PC-9 (cell line): ENCODE measurements at regions of chr11 and their contacts with region 1.

Region 1: GRCh38 chr11:86644291-86644690 is 28.1 kb downstream of the ME3 start:
- DNase-seq: no peak
- H3K4me3 ChIP-seq: no peak overlapping the region
- H3K27ac ChIP-seq: no peak overlapping the region
- H3K4me1 ChIP-seq: peaks cover 21% of the 10 kb centered on the region
- H3K27me3 ChIP-seq: no peaks in the 10 kb centered on the region
- CTCF ChIP-seq: no peak

Region 2: GRCh38 chr11:85826116-85826855 is 818.0 kb before region 1 on chr11:
- CTCF ChIA-PET with region 1: no interaction called
- POLR2A ChIA-PET with region 1: interaction called, 10 read pairs
- intact Hi-C with region 1: no loop called
- DNase-seq: peak in 1 of 2 experiments; percentile 41
- H3K4me3 ChIP-seq: no peak overlapping the region
- H3K27ac ChIP-seq: peak overlapping the region; percentile 93
- H3K4me1 ChIP-seq: peaks cover 68% of the 10 kb centered on the region
- H3K27me3 ChIP-seq: no peaks in the 10 kb centered on the region
- CTCF ChIP-seq: peak; percentile 69

Region 3: DNA sequence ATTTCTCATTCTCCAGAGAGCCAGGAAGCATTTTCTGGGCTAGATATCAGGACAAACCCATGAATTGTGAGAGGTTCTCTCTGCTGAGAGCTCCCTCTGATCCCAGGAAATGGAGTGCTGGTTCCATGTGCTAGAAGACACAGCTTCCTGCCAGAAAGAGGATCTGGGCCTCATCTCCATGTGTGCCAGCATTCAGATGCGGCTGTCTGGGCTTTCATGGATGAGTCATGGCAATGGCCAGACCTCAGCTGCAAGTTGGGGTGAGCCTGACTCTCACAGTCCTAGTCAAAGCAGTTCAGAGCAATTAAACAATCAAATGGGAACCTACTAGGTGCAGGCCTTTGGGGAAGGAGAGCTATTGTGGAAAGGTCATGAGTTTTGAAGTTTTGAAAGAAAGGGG is 482.1 kb before region 1 on chr11:
- CTCF ChIA-PET with region 1: no interaction called
- POLR2A ChIA-PET with region 1: no interaction called
- intact Hi-C with region 1: no loop called
- DNase-seq: no peak
- H3K4me3 ChIP-seq: no peak overlapping the region
- H3K27ac ChIP-seq: no peak overlapping the region
- H3K4me1 ChIP-seq: peaks cover 56% of the 10 kb centered on the region
- H3K27me3 ChIP-seq: no peaks in the 10 kb centered on the region
- CTCF ChIP-seq: no peak